ENCODE measurements at regions of chr1 and their contacts with region 1.

Region 1: GRCh38 chr1:92858564-92859399 is 26.9 kb downstream of the RPL5 start:
- DNase-seq: no peak
- H3K4me3 ChIP-seq: peak overlapping the region; percentile 9 to 15
- H3K27ac ChIP-seq: no peak overlapping the region
- H3K4me1 ChIP-seq: no peaks in the 10 kb centered on the region
- H3K27me3 ChIP-seq: no peaks in the 10 kb centered on the region
- CTCF ChIP-seq: peak; percentile 92 to 99 (median 99)
- POLR2A ChIP-seq: no peak

Region 2: GRCh38 chr1:92623187-92623778 is 235.5 kb before region 1 on chr1:
- intact Hi-C with region 1: no loop called
- DNase-seq: no peak
- H3K4me3 ChIP-seq: no peak overlapping the region
- H3K27ac ChIP-seq: no peak overlapping the region
- H3K4me1 ChIP-seq: no peaks in the 10 kb centered on the region
- H3K27me3 ChIP-seq: no peaks in the 10 kb centered on the region
- CTCF ChIP-seq: peak in 1 of 3 experiments; percentile 21
- POLR2A ChIP-seq: no peak

Region 3: DNA sequence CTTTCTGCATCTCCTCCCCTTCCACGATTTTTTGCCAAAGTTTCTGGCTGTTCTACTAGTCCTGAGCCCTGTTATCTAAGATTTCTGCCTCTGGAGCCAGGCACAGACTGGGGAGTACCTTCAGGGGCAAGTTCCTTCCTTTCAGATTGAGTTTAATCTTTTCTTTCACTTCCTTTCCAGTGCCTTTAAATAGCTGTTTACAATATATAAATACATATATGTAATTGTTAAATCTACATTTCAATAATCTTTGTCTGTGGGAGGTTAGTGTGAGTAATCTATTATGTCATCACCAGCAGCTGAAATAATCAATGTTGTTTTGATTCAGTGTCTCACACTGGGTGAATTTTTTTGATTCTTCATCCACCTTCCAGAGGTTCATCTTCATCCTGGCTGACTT is 70.7 kb after region 1 on chr1:
- intact Hi-C with region 1: no loop called
- DNase-seq: no peak
- H3K4me3 ChIP-seq: no peak overlapping the region
- H3K27ac ChIP-seq: no peak overlapping the region
- H3K4me1 ChIP-seq: peaks cover 13% of the 10 kb centered on the region
- H3K27me3 ChIP-seq: no peaks in the 10 kb centered on the region
- CTCF ChIP-seq: no peak
- POLR2A ChIP-seq: no peak

Region 4: DNA sequence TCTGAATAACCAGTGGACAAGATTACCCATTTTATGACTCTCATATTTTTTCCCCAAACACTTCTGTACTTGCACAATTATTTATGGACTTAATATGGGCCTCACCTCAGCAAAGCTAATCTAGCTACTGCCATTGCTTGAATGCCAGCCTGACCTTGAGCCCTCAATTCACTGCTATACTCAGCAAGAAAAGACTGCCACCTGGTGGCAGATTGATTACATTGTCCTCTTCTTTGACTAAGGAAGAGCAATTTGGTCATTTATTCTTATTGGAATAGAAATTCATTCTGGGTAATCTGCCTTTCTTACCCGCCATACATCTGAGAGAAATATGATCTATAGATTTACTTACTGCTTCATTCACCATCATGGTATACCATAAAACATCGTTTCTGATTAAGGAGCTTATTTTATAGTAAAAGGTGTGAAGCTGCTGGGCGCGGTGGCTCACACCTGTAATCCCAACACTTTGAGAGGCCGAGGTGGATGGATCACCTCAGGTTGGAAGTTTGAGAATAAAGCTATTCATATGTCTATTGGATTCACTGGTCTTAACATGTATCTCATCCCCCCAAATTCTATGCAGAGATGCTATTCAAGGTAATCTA is 135.4 kb after region 1 on chr1:
- intact Hi-C with region 1: loop called (anchors 2 kb)
- DNase-seq: no peak
- H3K4me3 ChIP-seq: no peak overlapping the region
- H3K27ac ChIP-seq: no peak overlapping the region
- H3K4me1 ChIP-seq: no peaks in the 10 kb centered on the region
- H3K27me3 ChIP-seq: no peaks in the 10 kb centered on the region
- CTCF ChIP-seq: peak; percentile 75 to 93 (median 76)
- POLR2A ChIP-seq: no peak

Region 5: DNA sequence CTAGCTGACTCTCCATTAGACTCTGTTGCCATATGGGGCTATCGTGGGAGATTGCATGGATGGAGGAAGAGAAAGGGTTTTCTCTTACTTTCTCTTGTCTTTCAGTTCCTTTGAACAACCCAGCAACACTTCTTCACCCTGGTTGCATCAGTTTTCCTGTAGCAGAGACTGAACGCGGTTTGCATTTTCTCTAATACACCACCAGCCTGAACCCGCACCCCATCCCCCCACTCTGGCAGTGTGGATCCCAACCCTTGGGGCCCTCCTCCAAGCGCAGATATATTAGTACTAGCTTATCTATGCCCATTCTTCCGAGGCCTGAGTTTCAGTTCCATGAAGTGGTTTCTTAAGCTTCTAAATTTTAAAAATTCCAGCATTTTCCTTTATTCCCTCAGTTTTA is 499.5 kb after region 1 on chr1:
- intact Hi-C with region 1: no loop called
- DNase-seq: no peak
- H3K4me3 ChIP-seq: no peak overlapping the region
- H3K27ac ChIP-seq: no peak overlapping the region
- H3K4me1 ChIP-seq: peaks cover 45% of the 10 kb centered on the region
- H3K27me3 ChIP-seq: no peaks in the 10 kb centered on the region
- CTCF ChIP-seq: no peak
- POLR2A ChIP-seq: no peak